ENCODE measurements at regions of chr14 and their contacts with region 1.

Region 1: DNA sequence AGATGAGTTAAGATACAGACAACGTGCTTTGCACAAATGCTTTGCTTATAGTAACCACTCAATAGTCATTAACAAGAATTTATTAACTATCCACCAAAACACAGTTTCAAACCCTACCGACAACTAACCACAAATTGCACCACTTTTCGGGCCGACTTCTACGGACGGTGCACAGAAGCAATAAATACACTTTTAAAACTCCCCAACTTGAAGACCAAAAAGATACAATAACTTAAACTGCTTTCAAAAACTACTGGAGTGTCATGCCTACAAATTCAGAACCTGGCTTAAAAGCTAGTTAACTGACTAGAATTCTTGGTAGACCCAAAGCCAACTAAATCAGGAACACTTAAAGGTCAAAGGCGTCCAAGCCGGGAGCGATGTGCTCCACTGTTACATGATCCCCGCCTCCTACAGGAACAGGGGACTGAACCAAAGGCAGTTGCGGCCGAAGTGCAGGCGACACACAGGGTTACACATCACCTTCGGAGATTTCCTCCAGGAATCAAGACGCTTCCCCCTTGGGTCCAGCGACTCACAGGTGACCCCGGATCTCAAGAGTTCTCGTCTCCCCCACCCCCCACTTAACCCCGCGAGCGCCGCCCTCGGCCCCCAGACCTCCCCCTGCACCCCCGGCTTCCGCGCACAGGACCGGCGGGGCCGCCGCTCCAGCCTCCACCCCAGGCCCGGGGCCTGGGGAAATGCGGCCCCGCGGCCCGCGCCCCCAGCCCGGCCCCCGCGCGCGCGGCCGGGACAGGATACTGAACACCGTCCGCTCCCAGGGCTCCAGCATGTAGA is 507 bp downstream of the SPTSSA start:
- DNase-seq: peak; percentile 57 to 78 (median 68)
- ATAC-seq: peak; percentile 36 to 59
- H3K4me3 ChIP-seq: peak overlapping the region; percentile 97
- H3K27ac ChIP-seq: peak overlapping the region; percentile 82
- H3K4me1 ChIP-seq: peaks cover 5% of the 10 kb centered on the region
- H3K27me3 ChIP-seq: no peaks in the 10 kb centered on the region

Region 2: GRCh38 chr14:34496679-34497513 is 35.4 kb after region 1 on chr14:
- intact Hi-C with region 1: loop called in 1 of 4 experiments (anchors 2 kb)
- DNase-seq: peak; percentile 89 to 94 (median 91)
- ATAC-seq: peak; percentile 93 to 95
- H3K4me3 ChIP-seq: no peak overlapping the region
- H3K27ac ChIP-seq: peak overlapping the region; percentile 79
- H3K4me1 ChIP-seq: peaks cover 3% of the 10 kb centered on the region
- H3K27me3 ChIP-seq: no peaks in the 10 kb centered on the region

Region 3: DNA sequence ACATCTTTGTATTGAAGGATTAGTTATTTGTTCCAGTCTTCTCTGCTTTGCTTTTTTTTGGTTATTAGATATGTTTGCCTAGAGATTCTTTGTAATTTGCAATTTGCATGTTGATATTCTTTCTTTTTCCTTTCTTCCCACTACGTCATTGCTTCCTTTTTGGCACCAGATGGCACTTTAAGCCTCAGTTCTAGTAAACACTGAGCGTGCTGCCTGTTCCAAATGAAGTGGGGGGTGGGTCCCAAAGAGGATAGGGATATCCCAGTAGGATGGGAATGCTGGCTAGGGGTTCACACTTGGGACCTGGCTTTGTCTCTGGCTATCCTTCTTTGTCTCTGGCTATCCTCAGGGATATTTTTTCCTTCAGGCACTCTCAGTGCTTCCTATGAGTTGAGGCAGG is 61.0 kb after region 1 on chr14:
- intact Hi-C with region 1: loop called in 1 of 4 experiments (anchors 10 kb)
- DNase-seq: no peak
- ATAC-seq: no peak
- H3K4me3 ChIP-seq: no peak overlapping the region
- H3K27ac ChIP-seq: no peak overlapping the region
- H3K4me1 ChIP-seq: no peaks in the 10 kb centered on the region
- H3K27me3 ChIP-seq: no peaks in the 10 kb centered on the region

Region 4: GRCh38 chr14:34539407-34540180 is 78.1 kb after region 1 on chr14 and contains the start of gene EAPP:
- intact Hi-C with region 1: loop called in 1 of 4 experiments (anchors 5 kb)
- DNase-seq: peak; percentile 98 to 99 (median 99)
- ATAC-seq: peak; percentile 99
- H3K4me3 ChIP-seq: peak within 1 kb of the TSS; percentile 89
- H3K27ac ChIP-seq: peak within 1 kb of the TSS; percentile 68
- H3K4me1 ChIP-seq: peaks cover 1% of the 10 kb centered on the region
- H3K27me3 ChIP-seq: no peaks in the 10 kb centered on the region
- total RNA-seq, gene EAPP: 18.9 to 25.3 (median 22.2) TPM